CD4-positive, alpha-beta memory T cell (primary cell): ENCODE measurements at regions of chr16 and their contacts with region 1.

Region 1: DNA sequence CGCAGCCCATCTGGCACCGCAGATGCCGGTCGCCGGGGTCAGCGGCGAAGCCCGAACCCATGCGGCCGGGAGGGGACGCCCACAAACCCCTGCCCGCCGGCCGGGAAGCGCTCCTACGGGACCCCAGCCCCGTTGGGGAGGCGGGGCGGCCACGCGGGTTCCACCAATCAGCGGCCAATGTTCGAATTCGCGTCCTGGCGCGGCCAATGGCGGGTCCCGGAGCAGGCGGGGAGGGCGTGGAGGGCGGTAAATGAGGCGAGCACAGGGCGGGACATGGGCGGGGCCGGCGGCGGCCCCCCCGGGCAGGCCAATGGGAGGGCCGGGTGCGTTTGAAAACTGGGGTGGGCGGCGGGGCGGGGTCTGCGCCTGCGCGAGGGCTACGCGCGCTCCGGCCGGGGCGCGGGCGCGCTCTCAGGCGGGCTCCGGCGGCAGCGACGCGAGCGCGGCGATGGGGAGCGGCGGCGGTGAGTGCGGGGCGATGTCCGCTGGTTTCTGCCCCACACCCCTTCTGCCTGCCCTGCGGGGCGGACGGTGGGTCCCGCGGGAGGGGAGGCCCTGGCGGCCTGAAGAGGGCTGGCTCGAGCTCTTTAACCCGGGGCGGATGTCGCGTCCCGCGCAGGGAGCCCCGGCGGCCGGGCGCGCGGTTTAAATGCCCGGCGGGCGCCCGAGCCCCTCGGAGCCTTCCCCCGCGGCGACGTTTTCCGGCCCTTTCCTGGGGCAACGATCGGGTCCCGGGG is at the start of gene CCNF:
- DNase-seq: peak; percentile 91 to 96 (median 93)
- H3K4me3 ChIP-seq: peak within 1 kb of the TSS; percentile 58 to 76
- H3K4me3 Mint-ChIP-seq: peak within 1 kb of the TSS; percentile 88 to 93 (median 90)
- H3K27ac ChIP-seq: peak within 1 kb of the TSS; percentile 67
- H3K27ac Mint-ChIP-seq: peak within 1 kb of the TSS; percentile 70 to 91 (median 85)
- H3K4me1 ChIP-seq: peaks cover 20% of the 10 kb centered on the region
- H3K4me1 Mint-ChIP-seq: peaks cover 14 to 25% (median 16%) of the 10 kb centered on the region in 4 donors
- H3K27me3 ChIP-seq: no peaks in the 10 kb centered on the region
- H3K27me3 Mint-ChIP-seq: no peaks in the 10 kb centered on the region
- total RNA-seq, gene CCNF: 4.7 TPM

Region 2: DNA sequence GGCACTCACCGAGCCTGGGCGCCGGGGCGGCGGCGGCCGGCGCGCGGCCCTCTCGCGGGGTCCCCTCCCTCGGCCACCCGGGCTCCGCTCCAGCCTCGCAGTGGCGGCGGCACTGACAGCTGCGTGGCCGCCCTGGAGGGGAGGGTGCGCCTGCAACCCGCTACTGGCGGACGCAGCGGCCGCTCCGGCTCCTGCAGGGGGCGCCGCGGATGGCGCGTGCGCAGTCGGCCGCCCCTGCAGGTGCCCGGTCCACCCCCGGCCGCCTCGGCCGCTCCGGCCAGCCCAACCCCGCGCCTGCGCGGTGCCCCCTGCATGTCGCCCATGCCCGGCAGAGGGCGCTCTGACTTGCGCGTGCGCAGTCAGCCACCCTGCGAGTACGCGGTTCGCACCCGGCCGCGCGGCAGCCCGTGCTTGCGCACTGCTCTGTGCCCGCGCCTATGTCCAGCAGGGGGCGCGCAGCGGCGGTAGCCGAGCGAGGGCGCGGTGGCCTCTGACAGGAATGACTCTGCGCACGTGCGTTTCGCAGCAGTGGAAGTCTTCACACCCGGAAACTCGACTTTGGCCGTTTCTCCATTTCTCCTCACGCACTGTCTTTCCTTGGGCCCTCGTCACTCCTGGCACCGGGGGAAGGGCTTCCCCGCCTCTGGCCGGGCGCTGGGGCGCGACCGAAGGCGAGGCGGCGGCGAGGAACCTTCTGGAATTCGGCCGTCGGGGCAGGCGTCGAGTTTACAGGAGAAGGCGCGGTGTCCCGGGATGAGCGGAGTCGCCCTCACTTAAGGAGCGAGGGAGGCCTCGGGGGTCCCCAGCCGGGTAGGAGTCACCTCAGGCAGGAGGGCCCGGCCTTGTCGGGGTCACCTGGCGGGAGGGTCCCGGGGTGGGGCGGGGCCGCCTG is 88.4 kb before region 1 on chr16 and contains the start of gene ABCA3:
- CTCF ChIA-PET with region 1: interaction called, 3 read pairs
- POLR2A ChIA-PET with region 1: interaction called, 6 read pairs
- intact Hi-C with region 1: loop called (anchors 1 kb)
- DNase-seq: peak; percentile 85 to 96 (median 93)
- H3K4me3 ChIP-seq: peak within 1 kb of the TSS; percentile 1 to 45
- H3K4me3 Mint-ChIP-seq: peak within 1 kb of the TSS; percentile 84 to 88 (median 86)
- H3K27ac ChIP-seq: no peak within 1 kb of the TSS
- H3K27ac Mint-ChIP-seq: peak within 1 kb of the TSS in 6 of 7 donors; percentile 61 to 84 (median 77)
- H3K4me1 ChIP-seq: peaks cover 17% of the 10 kb centered on the region
- H3K4me1 Mint-ChIP-seq: peaks cover 9 to 26% (median 15%) of the 10 kb centered on the region in 4 donors
- H3K27me3 ChIP-seq: no peaks in the 10 kb centered on the region
- H3K27me3 Mint-ChIP-seq: peaks cover 2% of the 10 kb centered on the region in 2 donors
- total RNA-seq, gene ABCA3: 8.5 to 12.7 TPM

Region 3: GRCh38 chr16:2404099-2404498 is 25.1 kb before region 1 on chr16:
- CTCF ChIA-PET with region 1: no interaction called
- POLR2A ChIA-PET with region 1: no interaction called
- intact Hi-C with region 1: no loop called
- DNase-seq: no peak
- H3K4me3 ChIP-seq: no peak overlapping the region
- H3K4me3 Mint-ChIP-seq: no peak overlapping the region
- H3K27ac ChIP-seq: no peak overlapping the region
- H3K27ac Mint-ChIP-seq: no peak overlapping the region
- H3K4me1 ChIP-seq: no peaks in the 10 kb centered on the region
- H3K4me1 Mint-ChIP-seq: no peaks in the 10 kb centered on the region
- H3K27me3 ChIP-seq: no peaks in the 10 kb centered on the region
- H3K27me3 Mint-ChIP-seq: no peaks in the 10 kb centered on the region

Region 4: GRCh38 chr16:2459647-2460390 is 30.6 kb after region 1 on chr16 and contains the start of gene TEDC2:
- CTCF ChIA-PET with region 1: interaction called, 9 read pairs
- POLR2A ChIA-PET with region 1: interaction called, 9 read pairs
- intact Hi-C with region 1: loop called (anchors 1 kb)
- DNase-seq: peak; percentile 94 to 97 (median 96)
- H3K4me3 ChIP-seq: peak within 1 kb of the TSS; percentile 42 to 56
- H3K4me3 Mint-ChIP-seq: peak within 1 kb of the TSS; percentile 86 to 93 (median 88)
- H3K27ac ChIP-seq: peak within 1 kb of the TSS; percentile 53
- H3K27ac Mint-ChIP-seq: peak within 1 kb of the TSS; percentile 38 to 90 (median 80)
- H3K4me1 ChIP-seq: peaks cover 14% of the 10 kb centered on the region
- H3K4me1 Mint-ChIP-seq: peaks cover 5 to 8% (median 6%) of the 10 kb centered on the region in 4 donors
- H3K27me3 ChIP-seq: no peaks in the 10 kb centered on the region
- H3K27me3 Mint-ChIP-seq: no peaks in the 10 kb centered on the region
- total RNA-seq, gene TEDC2: 0.44 to 0.55 TPM

Region 5: DNA sequence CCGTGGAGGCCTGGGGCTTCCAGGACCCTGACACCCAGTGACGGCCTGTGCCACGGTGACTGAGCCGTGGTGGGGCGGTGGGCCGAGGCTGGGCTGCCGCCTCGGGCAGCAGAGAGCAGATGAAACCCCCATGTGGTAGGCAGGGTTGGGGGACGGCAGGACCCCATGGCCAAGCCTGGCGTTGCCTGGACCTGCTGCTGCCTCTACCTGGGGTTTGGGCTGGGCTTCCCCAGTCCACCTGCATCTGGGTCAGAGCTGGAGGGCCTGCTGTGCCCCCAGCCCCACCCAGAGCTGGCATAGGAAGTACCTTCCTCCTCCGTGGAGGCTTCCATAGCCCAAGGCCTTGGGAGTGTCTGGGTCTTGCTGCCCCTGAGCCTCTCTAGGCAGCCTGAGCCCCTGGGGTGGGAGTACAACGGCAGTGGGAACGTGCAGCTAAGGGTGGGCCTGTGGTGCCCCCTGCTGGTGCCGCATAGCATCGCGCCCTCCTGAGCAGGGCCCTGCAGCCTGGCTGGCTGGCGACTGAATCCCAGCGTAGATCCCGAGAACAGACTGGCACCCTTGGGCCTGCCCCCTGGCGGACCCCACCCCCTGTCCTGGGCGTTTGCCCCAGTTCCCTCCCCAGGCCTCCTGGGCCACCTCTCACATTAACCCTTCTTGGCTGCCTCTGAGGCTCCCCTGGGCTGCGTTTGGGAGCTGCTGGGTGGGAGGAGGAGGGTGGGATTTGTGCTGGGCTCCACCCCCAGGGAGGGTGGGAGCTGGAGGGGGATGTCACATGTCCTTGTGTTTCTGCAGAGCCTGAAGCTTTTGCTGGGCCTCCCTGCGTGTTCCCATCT is 71.9 kb after region 1 on chr16:
- CTCF ChIA-PET with region 1: interaction called, 9 read pairs
- POLR2A ChIA-PET with region 1: no interaction called
- intact Hi-C with region 1: loop called (anchors 1 kb)
- DNase-seq: peak; percentile 73 to 81 (median 75)
- H3K4me3 ChIP-seq: no peak overlapping the region
- H3K4me3 Mint-ChIP-seq: no peak overlapping the region
- H3K27ac ChIP-seq: no peak overlapping the region
- H3K27ac Mint-ChIP-seq: no peak overlapping the region
- H3K4me1 ChIP-seq: no peaks in the 10 kb centered on the region
- H3K4me1 Mint-ChIP-seq: no peaks in the 10 kb centered on the region
- H3K27me3 ChIP-seq: no peaks in the 10 kb centered on the region
- H3K27me3 Mint-ChIP-seq: no peaks in the 10 kb centered on the region

Region 6: DNA sequence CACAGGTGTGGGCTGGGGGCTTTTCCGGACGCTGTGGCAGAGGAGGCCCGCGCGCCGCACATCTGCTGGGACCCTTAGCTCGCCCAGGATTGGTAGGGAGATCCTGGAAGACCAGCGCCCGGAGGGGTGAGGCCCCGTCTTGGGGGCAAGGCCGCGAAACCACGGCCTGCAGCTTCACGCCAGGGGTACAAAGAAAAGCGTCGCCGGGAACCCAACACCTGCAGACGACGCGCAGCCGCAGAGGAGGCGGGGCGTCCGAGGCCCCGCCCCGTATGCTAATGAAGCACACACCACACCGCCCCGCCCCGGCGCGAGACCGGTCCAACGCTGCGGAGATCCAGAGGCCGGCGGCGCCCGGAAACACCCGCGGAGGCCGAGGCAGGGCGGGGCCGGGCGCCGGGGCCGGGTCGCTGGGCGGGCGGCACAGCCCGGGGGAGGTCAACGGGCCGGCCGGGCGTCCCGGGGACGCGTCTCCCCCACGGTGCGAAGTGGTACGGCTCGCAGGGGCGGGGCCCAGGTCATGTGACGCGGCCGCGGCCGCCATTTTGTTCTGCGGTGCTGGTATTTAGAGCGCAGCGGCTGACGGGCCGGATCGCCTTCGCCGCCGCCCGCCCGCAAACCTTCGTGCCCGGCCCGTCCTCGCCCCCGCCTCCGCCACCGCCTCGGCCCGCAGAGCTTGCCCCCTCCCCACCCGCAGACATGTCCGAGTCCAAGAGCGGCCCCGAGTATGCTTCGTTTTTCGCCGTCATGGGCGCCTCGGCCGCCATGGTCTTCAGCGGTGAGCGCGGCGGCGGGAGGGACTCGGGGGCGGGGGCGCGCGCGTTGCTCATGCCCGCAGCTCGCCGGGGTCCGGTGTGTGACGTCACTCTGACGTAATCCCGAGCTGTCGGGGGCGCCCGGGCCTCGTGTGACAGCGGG is 84.5 kb after region 1 on chr16 and contains the start of gene ATP6V0C:
- CTCF ChIA-PET with region 1: no interaction called
- POLR2A ChIA-PET with region 1: no interaction called
- intact Hi-C with region 1: loop called (anchors 1 kb)
- DNase-seq: peak; percentile 90 to 97 (median 94)
- H3K4me3 ChIP-seq: peak within 1 kb of the TSS; percentile 74 to 77
- H3K4me3 Mint-ChIP-seq: peak within 1 kb of the TSS; percentile 90 to 96 (median 92)
- H3K27ac ChIP-seq: peak within 1 kb of the TSS; percentile 94
- H3K27ac Mint-ChIP-seq: peak within 1 kb of the TSS; percentile 91 to 98 (median 97)
- H3K4me1 ChIP-seq: peaks cover 48% of the 10 kb centered on the region
- H3K4me1 Mint-ChIP-seq: peaks cover 32 to 64% (median 46%) of the 10 kb centered on the region in 4 donors
- H3K27me3 ChIP-seq: no peaks in the 10 kb centered on the region
- H3K27me3 Mint-ChIP-seq: no peaks in the 10 kb centered on the region
- total RNA-seq, gene ATP6V0C: 125 to 129 TPM